ENCODE measurements at regions of chr6 and their contacts with region 1.

Region 1: GRCh38 chr6:85612690-85613474 is 19.2 kb upstream of the SNX14 start:
- DNase-seq: no peak
- H3K4me3 ChIP-seq: no peak overlapping the region
- H3K27ac ChIP-seq: no peak overlapping the region
- H3K4me1 ChIP-seq: no peaks in the 10 kb centered on the region
- H3K27me3 ChIP-seq: no peaks in the 10 kb centered on the region
- CTCF ChIP-seq: no peak
- EP300 ChIP-seq: no peak
- POLR2A ChIP-seq: peak in 1 of 2 experiments; percentile 12; a peak in 1 of 3 replicates
- RAD21 ChIP-seq: no peak

Region 2: GRCh38 chr6:85593438-85594196 is 19.3 kb before region 1 on chr6 and contains the start of gene SNX14:
- CTCF ChIA-PET with region 1: interaction called, 6 read pairs
- POLR2A ChIA-PET with region 1: interaction called, 57 read pairs
- DNase-seq: peak; percentile 50 to 87
- H3K4me3 ChIP-seq: peak within 1 kb of the TSS; percentile 77 to 87 (median 81)
- H3K27ac ChIP-seq: peak within 1 kb of the TSS; percentile 20; the same call in 1 of the 2 replicates
- H3K4me1 ChIP-seq: no peaks in the 10 kb centered on the region
- H3K27me3 ChIP-seq: no peaks in the 10 kb centered on the region; a peak in 2 of 7 replicates
- CTCF ChIP-seq: no peak; a peak in 1 of 4 replicates
- EP300 ChIP-seq: 0 out of 3 replicates have a peak, but pooled peaks of 1 of the 2 experiments have one; percentile 7
- POLR2A ChIP-seq: peak in 1 of 2 experiments; percentile 62; a peak in 1 of 3 replicates
- RAD21 ChIP-seq: no peak; a peak in 1 of 4 replicates
- total RNA-seq, gene SNX14: 24.2 and 29.6 TPM in 2 replicates

Measured in H1 (cell line).